Thyroid gland (tissue), 4 donors: ENCODE measurements at regions of chr2 and their contacts with region 1.

Region 1: DNA sequence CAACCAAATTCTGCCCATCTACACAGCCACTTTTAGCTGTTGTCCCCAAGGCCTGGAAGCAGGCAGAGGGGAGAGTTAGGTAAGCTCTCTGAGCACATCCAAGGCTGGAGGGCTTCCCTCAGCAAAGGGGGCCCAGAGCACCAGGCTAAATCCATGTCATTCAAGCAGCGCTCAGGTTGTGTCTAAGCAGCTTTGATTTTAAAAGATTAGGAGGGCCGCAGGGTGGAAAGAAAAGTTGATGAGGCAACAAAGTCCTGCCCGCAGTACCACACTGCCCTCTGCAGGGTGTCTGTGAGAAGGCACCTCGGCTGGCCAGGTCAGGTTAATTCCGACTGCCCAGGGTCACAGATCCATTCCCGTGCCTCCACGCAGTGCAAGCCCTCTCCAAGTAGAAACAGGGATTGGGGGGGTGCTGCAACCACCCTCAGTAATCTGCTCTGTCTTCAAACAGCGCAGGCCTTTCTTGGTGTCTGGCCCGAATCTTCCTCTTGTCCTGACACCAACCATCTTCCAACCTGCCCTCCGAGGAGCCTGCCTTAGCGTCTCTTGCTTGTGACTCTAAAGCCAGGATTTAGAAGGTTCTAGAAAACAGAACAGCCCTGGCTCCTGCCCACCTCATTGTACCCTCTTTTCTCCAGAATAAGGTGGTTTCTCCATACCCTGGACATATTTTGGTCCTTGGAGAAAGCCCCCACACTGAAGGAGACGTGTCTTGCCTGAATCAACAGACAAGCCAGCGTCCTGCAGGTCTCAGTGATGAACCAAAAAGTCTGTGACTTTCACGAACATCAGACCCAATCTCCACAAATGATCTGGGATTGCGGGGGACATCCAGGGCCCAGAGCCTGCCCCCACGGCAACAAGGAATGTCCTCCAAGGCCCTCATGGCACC is 289.2 kb downstream of the TNS1 start:
- DNase-seq: peak; percentile 83
- H3K4me3 ChIP-seq: no peak overlapping the region
- H3K27ac ChIP-seq: peak overlapping the region in 1 of 3 donors; percentile 39
- H3K4me1 ChIP-seq: peaks cover 5 to 22% of the 10 kb centered on the region in 2 donors
- H3K27me3 ChIP-seq: no peaks in the 10 kb centered on the region
- CTCF ChIP-seq: peak; percentile 93 to 99 (median 97)
- POLR2A ChIP-seq: no peak

Region 2: DNA sequence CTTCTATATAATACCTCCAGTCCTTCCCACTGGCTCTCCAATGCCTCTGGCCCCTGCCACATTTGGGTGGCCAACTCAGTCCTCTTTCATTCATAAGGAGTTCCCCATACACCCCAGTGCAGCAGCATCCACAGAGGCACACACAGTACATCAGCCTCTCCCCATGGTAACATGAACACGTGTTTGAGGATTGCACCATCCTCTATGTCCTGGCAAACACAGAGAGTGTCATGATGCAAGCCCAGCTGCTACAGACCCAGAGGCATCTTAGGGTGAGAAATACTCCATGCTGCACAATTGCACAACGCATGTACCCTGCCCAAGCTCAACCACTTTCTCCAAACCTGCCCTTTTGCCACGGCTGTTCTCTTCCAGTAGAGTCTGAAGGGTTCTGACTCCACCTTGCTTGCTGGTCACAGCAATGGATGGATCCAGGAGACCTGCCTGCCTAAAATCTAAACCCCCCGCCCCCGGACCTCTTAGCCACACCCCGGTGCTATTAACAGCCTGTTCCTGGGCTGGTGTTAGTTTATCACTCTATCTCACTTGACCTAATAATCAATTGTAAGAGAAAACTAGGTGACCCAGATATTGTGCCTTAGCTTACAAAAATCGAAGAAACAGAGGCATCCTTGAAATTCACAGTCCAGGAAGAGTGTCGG is 1029.7 kb before region 1 on chr2:
- intact Hi-C with region 1: loop called (anchors 5 kb)
- DNase-seq: no peak
- H3K4me3 ChIP-seq: no peak overlapping the region
- H3K27ac ChIP-seq: peak overlapping the region in 1 of 3 donors; percentile 42
- H3K4me1 ChIP-seq: peaks cover 4 to 44% of the 10 kb centered on the region in 2 donors
- H3K27me3 ChIP-seq: no peaks in the 10 kb centered on the region
- CTCF ChIP-seq: no peak
- POLR2A ChIP-seq: no peak

Region 3: DNA sequence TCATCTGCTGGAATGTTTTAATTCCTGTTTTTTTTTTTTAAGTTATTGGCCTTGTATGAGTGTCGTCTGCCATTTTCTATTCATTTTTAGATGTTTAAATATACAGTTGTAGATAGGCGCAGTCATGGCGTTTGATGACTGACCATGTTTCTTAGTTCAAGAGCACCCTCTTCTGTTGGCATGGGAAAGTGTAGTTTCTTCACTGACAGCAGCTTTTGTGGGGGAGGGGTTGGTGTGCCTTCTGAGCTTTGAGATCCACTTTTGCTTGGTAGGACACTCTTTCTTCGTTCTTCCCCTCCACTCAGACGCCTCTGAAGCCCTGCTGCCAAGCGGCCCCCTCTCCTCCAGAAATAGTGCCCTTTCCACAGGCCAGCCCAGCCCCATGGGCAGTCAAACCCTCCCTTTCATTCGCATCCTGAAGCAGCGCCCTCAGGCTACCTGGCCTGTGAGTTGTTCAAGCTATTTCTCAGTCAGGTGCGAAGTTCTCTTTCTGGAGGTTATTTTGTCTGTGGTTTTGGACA is 202.8 kb before region 1 on chr2:
- intact Hi-C with region 1: loop called (anchors 10 kb)
- DNase-seq: peak; percentile 79 to 81
- H3K4me3 ChIP-seq: no peak overlapping the region
- H3K27ac ChIP-seq: no peak overlapping the region
- H3K4me1 ChIP-seq: peaks cover 12 to 14% of the 10 kb centered on the region in 2 donors
- H3K27me3 ChIP-seq: no peaks in the 10 kb centered on the region
- CTCF ChIP-seq: peak; percentile 22 to 99 (median 76)
- POLR2A ChIP-seq: no peak

Region 4: DNA sequence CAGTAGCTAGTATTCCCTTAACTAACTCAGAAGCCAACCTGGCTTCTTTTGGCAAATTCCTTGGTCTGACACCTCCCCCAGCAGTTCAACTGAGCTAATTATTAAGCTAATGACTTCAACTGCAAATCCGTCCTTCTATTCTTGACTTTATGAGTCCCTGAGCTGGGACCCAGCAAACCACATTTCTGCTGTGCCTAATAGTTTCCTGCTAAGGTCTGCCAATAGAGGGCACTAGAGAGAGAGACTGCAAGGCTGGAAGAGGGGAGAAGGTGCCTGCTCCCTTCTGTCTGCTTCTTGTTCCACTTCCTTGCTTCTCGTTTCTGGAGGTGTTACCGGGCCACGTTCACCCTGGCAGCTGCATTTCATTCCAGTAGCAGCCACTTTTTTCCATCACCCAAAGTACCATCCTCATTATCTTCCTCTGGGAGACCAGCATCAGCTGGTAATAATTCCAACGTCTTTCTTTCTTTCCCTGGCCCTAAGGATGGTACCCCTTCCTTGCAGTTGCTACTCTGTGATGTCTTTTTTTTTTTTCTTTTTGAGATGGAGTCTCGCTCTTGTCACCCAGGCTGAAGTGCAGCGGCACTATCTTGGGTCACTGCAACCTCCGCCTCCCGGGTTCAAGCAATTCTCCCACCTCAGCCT is 62.8 kb before region 1 on chr2:
- intact Hi-C with region 1: loop called (anchors 5 kb)
- DNase-seq: peak; percentile 67 to 68
- H3K4me3 ChIP-seq: no peak overlapping the region
- H3K27ac ChIP-seq: no peak overlapping the region
- H3K4me1 ChIP-seq: peaks cover 30 to 31% of the 10 kb centered on the region in 2 donors
- H3K27me3 ChIP-seq: no peaks in the 10 kb centered on the region
- CTCF ChIP-seq: peak; percentile 64 to 83 (median 76)
- POLR2A ChIP-seq: no peak